AG04450 (cell line): ENCODE measurements at regions of chr19 and their contacts with region 1.

Region 1: DNA sequence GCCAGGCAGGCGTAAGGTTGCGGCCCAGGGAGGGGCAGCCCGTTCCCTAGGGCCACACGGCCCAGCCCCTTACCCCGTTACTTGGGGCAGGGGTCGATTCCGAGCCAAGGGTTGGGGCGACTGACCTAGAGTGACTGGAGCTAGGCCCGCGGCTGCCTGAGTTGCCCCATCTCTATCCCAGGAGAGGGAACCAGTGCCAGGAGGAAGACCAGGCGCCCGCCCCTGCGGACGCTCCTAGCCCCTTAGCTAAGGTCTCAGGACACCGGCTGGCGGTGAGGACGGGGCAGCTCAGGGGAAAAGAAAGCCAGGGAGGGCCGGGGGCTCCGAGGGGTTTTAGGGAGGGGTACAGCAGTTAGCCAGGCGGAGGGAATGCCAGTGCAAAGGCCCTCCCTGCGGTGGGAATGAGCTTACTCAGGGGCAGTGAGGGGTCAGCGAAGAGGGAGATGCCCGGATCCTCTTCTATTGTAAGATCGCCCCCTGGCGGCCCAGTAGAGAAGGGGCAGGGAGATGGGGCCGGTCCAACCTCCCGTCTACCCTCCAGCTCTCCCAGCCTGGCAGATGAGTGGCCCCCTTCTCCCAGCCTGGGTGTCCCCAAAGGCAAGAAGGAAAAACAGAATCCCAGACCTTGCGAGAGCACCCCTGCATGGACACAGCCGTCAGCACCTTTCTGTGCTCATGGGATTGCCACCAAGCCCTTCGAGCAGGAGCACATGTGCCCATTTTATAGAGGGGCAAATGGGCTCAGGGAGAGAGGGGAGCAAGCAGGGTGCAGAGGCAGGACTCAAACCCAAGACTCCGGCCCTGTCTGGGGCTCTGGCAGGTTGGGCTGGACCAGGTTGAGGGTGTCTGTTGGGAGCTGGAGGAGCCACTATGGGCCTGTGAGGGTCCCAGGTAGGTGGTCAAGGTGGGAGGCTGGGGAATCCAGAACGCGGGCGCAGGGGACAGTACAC is 16.3 kb downstream of the CILP2 start:
- DNase-seq: no peak
- H3K4me3 ChIP-seq: no peak overlapping the region
- H3K27ac ChIP-seq: no peak overlapping the region
- H3K27me3 ChIP-seq: peaks cover 2% of the 10 kb centered on the region
- CTCF ChIP-seq: peak; percentile 71

Region 2: GRCh38 chr19:19531951-19532805 is 22.2 kb before region 1 on chr19:
- CTCF ChIA-PET with region 1: interaction called, 58 read pairs
- POLR2A ChIA-PET with region 1: interaction called, 3 read pairs
- DNase-seq: no peak
- H3K4me3 ChIP-seq: no peak overlapping the region
- H3K27ac ChIP-seq: no peak overlapping the region
- H3K27me3 ChIP-seq: no peaks in the 10 kb centered on the region
- CTCF ChIP-seq: peak; percentile 97

Region 3: DNA sequence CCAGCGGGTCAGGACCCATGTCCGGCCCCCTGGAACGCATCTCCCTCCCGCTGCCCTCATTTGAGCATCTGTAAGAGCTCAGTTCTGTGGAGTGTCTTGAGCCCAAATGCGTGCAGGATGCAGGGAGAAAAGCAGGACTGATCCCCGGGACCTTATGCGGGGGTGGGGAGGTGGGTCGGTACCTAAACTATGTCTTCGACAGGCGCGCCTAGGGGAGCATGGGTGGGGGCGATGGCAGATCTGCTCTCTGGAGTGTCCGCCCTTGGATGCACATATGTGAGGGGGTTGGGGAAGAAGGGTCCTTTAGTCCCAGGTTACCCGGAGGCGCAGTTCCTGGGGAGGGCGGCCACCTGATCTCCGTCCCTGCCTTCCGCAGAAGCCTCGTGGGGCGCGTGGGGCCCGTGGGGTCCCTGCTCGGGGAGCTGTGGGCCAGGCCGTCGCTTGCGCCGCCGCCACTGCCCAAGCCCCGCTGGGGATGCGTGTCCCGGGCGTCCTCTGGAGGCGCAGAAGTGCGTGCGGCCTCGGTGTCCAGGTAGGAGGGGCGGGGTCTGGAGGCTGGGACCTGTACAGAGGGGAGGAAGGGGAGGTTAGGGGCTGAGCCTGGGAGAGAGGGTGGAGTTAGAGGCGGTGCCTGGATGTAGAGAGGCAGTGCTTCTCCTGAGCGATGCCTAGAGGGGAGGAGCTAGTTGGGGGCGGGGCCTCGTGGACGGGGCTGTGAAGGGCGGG is 13.5 kb before region 1 on chr19:
- CTCF ChIA-PET with region 1: interaction called, 22 read pairs
- POLR2A ChIA-PET with region 1: no interaction called
- DNase-seq: no peak
- H3K4me3 ChIP-seq: peak overlapping the region; percentile 18; the same call in 1 of the 2 replicates
- H3K27ac ChIP-seq: no peak overlapping the region
- H3K27me3 ChIP-seq: peaks cover 26% of the 10 kb centered on the region
- CTCF ChIP-seq: no peak

Region 4: DNA sequence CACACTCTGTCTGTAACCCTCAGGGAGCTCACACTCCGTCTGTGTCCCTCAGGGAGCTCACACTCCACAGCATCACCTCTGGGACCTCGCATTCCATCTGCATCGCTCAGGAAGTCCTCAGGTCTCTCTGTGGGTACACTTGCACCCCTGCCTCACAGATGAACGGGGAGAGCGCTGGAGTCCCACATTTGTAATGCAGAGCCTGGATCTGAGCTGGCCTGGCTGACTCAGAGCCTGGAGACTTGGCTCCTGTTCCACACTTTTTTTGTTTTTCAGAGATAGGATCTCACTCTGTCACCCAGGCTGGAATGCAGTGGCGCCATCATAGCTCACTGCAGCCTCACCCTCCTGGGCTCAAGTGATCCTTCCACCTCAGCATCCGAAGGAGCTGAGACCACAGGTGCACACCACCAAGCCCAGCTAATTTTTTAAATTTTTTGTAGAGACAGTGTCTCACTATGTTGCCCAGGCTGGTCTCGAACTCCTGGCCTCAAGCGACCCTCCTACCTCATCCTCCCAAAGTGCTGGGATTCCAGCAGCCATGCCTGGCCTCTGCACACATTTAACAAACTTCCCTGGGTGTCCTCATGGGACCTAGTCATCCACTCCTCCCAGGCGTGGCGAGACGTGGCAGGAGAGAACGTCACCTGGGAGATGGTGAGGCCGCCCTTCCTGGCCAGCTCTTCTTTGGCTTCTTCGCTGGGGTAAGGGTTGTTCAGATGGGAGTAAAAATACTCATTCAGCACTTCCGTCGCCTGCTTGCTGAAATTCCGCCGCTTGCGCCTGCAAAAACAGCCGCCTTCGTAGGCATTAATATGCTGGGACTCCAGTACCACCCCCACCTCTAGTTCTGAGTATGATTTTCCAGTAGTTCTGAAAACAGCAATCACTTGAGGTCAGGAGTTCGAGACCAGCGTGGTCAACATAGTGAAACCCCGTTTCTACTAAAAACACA is 14.7 kb after region 1 on chr19:
- CTCF ChIA-PET with region 1: interaction called, 46 read pairs
- POLR2A ChIA-PET with region 1: interaction called, 8 read pairs
- DNase-seq: no peak
- H3K4me3 ChIP-seq: no peak overlapping the region
- H3K27ac ChIP-seq: no peak overlapping the region
- H3K27me3 ChIP-seq: no peaks in the 10 kb centered on the region
- CTCF ChIP-seq: no peak

Region 5: GRCh38 chr19:19591133-19591825 is 36.9 kb after region 1 on chr19:
- CTCF ChIA-PET with region 1: interaction called, 10 read pairs
- POLR2A ChIA-PET with region 1: interaction called, 3 read pairs
- DNase-seq: peak; percentile 95
- H3K4me3 ChIP-seq: no peak overlapping the region; the same call in 1 of the 2 replicates
- H3K27ac ChIP-seq: peak overlapping the region; percentile 96
- H3K27me3 ChIP-seq: no peaks in the 10 kb centered on the region
- CTCF ChIP-seq: no peak